PC-9 (cell line): ENCODE measurements at regions of chr3 and their contacts with region 1.

Region 1: GRCh38 chr3:149752051-149752787 is at the start of gene COMMD2:
- DNase-seq: peak; percentile 79 to 84
- H3K4me3 ChIP-seq: peak within 1 kb of the TSS; percentile 88
- H3K27ac ChIP-seq: peak within 1 kb of the TSS; percentile 51
- H3K4me1 ChIP-seq: peaks cover 17% of the 10 kb centered on the region
- H3K27me3 ChIP-seq: no peaks in the 10 kb centered on the region
- CTCF ChIP-seq: peak; percentile 74
- total RNA-seq, gene COMMD2: 58.2 and 74.7 TPM in 2 replicates

Region 2: DNA sequence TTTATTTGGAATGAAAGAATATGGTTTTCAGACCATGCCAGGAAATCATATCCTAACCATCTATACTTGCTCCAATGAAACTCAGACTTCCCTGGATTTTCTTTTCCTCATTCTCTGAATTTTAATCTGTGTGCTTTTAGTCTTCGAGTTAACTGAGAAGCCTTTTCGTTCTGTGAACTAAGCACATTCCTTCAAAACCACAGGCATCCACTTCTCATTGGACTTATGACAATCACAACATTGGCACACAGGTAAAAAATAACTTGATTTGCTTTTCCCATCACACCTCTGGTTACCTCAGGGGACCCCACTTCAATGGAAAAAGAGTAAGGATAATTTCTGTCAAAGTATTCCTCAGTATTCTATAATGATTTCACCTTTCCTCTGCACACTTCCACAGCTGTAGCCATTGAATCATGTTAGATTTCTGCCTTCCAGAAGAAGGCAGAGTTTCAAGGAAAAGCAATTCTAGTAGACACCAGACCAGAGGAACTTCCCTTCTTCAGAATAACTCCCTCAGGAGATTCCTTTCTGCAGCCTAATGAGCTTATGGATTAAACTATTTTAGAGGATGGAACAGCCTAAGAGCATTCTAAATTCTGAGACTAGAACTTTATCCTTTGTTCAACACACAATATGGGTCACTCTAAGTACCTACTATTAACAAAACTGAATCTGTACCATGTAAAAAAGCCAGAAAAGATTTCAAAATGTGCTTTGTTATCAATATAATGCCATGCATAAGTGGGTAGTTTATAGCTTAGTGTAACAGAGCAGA is 15.9 kb before region 1 on chr3:
- CTCF ChIA-PET with region 1: no interaction called
- POLR2A ChIA-PET with region 1: no interaction called
- intact Hi-C with region 1: loop called (anchors 1 kb)
- DNase-seq: peak; percentile 57 to 90
- H3K4me3 ChIP-seq: no peak overlapping the region
- H3K27ac ChIP-seq: peak overlapping the region; percentile 81
- H3K4me1 ChIP-seq: peaks cover 27% of the 10 kb centered on the region
- H3K27me3 ChIP-seq: no peaks in the 10 kb centered on the region
- CTCF ChIP-seq: no peak

Region 3: GRCh38 chr3:151477591-151478334 is 1725.5 kb after region 1 on chr3:
- CTCF ChIA-PET with region 1: no interaction called
- POLR2A ChIA-PET with region 1: no interaction called
- intact Hi-C with region 1: no loop called
- DNase-seq: peak; percentile 46 to 51
- H3K4me3 ChIP-seq: no peak overlapping the region
- H3K27ac ChIP-seq: no peak overlapping the region
- H3K4me1 ChIP-seq: peaks cover 20% of the 10 kb centered on the region
- H3K27me3 ChIP-seq: no peaks in the 10 kb centered on the region
- CTCF ChIP-seq: no peak